Activated CD4-positive, alpha-beta T cell treated with anti-CD3 and anti-CD28 coated beads for 36 hours (primary cell): ENCODE measurements at regions of chrX and their contacts with region 1.

Region 1: DNA sequence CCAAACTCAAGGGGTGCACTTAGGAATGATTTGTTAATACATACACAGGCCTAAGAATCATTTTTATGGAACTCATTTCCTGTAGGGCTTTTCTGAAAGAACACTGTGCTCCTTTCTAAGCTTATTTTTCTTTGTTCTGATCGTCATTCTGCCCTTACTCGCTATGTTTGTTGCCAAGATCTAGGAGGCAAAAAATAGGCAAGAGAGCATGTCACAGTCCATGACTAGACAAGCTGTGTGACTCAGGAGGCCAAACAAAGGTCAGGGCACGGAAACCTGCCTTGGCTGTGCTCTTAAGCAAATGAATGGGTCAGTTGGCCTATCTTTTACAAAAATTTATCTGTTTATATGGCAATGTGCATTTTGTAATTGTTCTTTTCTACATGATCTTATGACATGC is 42.5 kb upstream of the C1GALT1C1 start:
- DNase-seq: no peak
- ATAC-seq: no peak
- H3K4me3 Mint-ChIP-seq: no peak overlapping the region
- H3K27ac Mint-ChIP-seq: no peak overlapping the region
- H3K4me1 Mint-ChIP-seq: peaks cover 20% of the 10 kb centered on the region
- H3K27me3 Mint-ChIP-seq: no peaks in the 10 kb centered on the region

Region 2: DNA sequence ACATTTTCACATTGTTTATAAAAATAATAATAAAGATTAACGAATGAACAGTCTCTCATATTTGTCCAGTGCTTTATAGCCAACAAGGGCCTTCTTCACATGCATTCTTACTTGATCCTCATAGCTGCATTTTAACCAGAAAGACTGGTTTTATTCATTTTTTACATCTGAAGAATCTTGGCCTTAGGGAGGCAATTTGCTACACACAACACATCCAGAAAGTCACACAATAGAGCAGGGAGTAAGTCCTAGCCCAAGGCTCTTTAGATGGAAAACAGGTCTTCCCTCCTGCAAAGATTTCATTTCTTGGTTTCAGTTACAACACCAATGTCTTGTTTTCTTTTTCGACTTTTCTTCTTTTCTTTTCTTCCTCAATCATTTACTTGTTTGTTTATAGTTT is 29.5 kb before region 1 on chrX:
- CTCF ChIA-PET with region 1: no interaction called
- POLR2A ChIA-PET with region 1: no interaction called
- intact Hi-C with region 1: no loop called
- DNase-seq: no peak
- ATAC-seq: no peak
- H3K4me3 Mint-ChIP-seq: no peak overlapping the region
- H3K27ac Mint-ChIP-seq: no peak overlapping the region
- H3K4me1 Mint-ChIP-seq: no peaks in the 10 kb centered on the region
- H3K27me3 Mint-ChIP-seq: no peaks in the 10 kb centered on the region

Region 3: DNA sequence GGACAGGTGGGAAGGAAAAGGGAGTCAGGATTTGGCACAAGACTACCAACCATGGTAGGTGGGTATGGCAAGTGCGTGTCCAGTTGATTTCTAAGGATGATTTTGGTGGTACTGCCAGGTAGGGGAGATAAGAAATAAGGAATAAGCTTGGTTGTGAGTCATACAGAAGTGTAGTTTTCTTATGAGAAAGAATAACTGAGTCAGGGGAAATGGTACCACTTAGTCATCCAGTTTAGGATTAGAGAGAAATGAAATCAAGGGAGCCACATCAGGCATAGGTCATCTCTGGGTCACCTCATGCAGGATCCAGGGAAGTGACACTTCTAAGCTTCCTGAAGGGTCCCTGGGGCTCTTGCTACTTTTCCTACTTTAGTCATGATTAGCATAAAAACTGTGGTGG is 64.6 kb after region 1 on chrX:
- CTCF ChIA-PET with region 1: interaction called, 3 read pairs
- POLR2A ChIA-PET with region 1: no interaction called
- intact Hi-C with region 1: loop called (anchors 1 to 10 kb)
- DNase-seq: no peak
- ATAC-seq: peak; percentile 89
- H3K4me3 Mint-ChIP-seq: no peak overlapping the region
- H3K27ac Mint-ChIP-seq: peak overlapping the region; percentile 74
- H3K4me1 Mint-ChIP-seq: peaks cover 23% of the 10 kb centered on the region
- H3K27me3 Mint-ChIP-seq: no peaks in the 10 kb centered on the region